CD4-positive, alpha-beta memory T cell (primary cell): ENCODE measurements at regions of chr19 and their contacts with region 1.

Region 1: GRCh38 chr19:38849860-38850435 is at the start of gene HNRNPL:
- DNase-seq: peak; percentile 99 to 100 (median 100)
- H3K4me3 ChIP-seq: peak within 1 kb of the TSS; percentile 94 to 98
- H3K4me3 Mint-ChIP-seq: peak within 1 kb of the TSS; percentile 94 to 97 (median 96)
- H3K27ac ChIP-seq: peak within 1 kb of the TSS; percentile 99
- H3K27ac Mint-ChIP-seq: peak within 1 kb of the TSS; percentile 83 to 100 (median 99)
- H3K4me1 ChIP-seq: peaks cover 58% of the 10 kb centered on the region
- H3K4me1 Mint-ChIP-seq: peaks cover 30 to 72% (median 50%) of the 10 kb centered on the region in 4 donors
- H3K27me3 ChIP-seq: no peaks in the 10 kb centered on the region
- H3K27me3 Mint-ChIP-seq: peaks cover 1% of the 10 kb centered on the region in 2 donors
- total RNA-seq, gene HNRNPL: 329 to 351 TPM

Region 2: GRCh38 chr19:38618590-38619360 is 231.2 kb before region 1 on chr19 and contains the start of gene EIF3K:
- CTCF ChIA-PET with region 1: no interaction called
- POLR2A ChIA-PET with region 1: interaction called, 18 read pairs
- intact Hi-C with region 1: no loop called
- DNase-seq: peak; percentile 95 to 97 (median 96)
- H3K4me3 ChIP-seq: peak within 1 kb of the TSS; percentile 97 to 99
- H3K4me3 Mint-ChIP-seq: peak within 1 kb of the TSS; percentile 95 to 100 (median 100)
- H3K27ac ChIP-seq: peak within 1 kb of the TSS; percentile 90
- H3K27ac Mint-ChIP-seq: peak within 1 kb of the TSS; percentile 93 to 100 (median 99)
- H3K4me1 ChIP-seq: peaks cover 57% of the 10 kb centered on the region
- H3K4me1 Mint-ChIP-seq: peaks cover 28 to 60% (median 45%) of the 10 kb centered on the region in 4 donors
- H3K27me3 ChIP-seq: no peaks in the 10 kb centered on the region
- H3K27me3 Mint-ChIP-seq: no peaks in the 10 kb centered on the region
- total RNA-seq, gene EIF3K: 320 to 340 TPM

Region 3: GRCh38 chr19:38759590-38760003 is 90.4 kb before region 1 on chr19:
- CTCF ChIA-PET with region 1: no interaction called
- POLR2A ChIA-PET with region 1: no interaction called
- intact Hi-C with region 1: no loop called
- DNase-seq: no peak
- H3K4me3 ChIP-seq: no peak overlapping the region
- H3K4me3 Mint-ChIP-seq: no peak overlapping the region
- H3K27ac ChIP-seq: no peak overlapping the region
- H3K27ac Mint-ChIP-seq: no peak overlapping the region
- H3K4me1 ChIP-seq: no peaks in the 10 kb centered on the region
- H3K4me1 Mint-ChIP-seq: peaks cover 0 to 5% (median 0%) of the 10 kb centered on the region in 4 donors
- H3K27me3 ChIP-seq: no peaks in the 10 kb centered on the region
- H3K27me3 Mint-ChIP-seq: peaks cover 0 to 2% of the 10 kb centered on the region in 2 donors

Region 4: GRCh38 chr19:38769635-38770211 is 80.2 kb before region 1 on chr19:
- CTCF ChIA-PET with region 1: no interaction called
- POLR2A ChIA-PET with region 1: interaction called, 25 read pairs
- intact Hi-C with region 1: no loop called
- DNase-seq: peak; percentile 87 to 94 (median 90)
- H3K4me3 ChIP-seq: peak overlapping the region in 1 of 2 donors; percentile 47
- H3K4me3 Mint-ChIP-seq: peak overlapping the region; percentile 37 to 71 (median 64)
- H3K27ac ChIP-seq: peak overlapping the region; percentile 48
- H3K27ac Mint-ChIP-seq: peak overlapping the region; percentile 78 to 95 (median 91)
- H3K4me1 ChIP-seq: peaks cover 6% of the 10 kb centered on the region
- H3K4me1 Mint-ChIP-seq: peaks cover 6 to 8% (median 7%) of the 10 kb centered on the region in 4 donors
- H3K27me3 ChIP-seq: no peaks in the 10 kb centered on the region
- H3K27me3 Mint-ChIP-seq: no peaks in the 10 kb centered on the region

Region 5: GRCh38 chr19:38862321-38863059 is 12.5 kb after region 1 on chr19:
- CTCF ChIA-PET with region 1: interaction called, 45 read pairs
- POLR2A ChIA-PET with region 1: interaction called, 297 read pairs
- intact Hi-C with region 1: no loop called
- DNase-seq: no peak
- H3K4me3 ChIP-seq: no peak overlapping the region
- H3K4me3 Mint-ChIP-seq: no peak overlapping the region
- H3K27ac ChIP-seq: no peak overlapping the region
- H3K27ac Mint-ChIP-seq: peak overlapping the region in 1 of 7 donors; percentile 4
- H3K4me1 ChIP-seq: peaks cover 33% of the 10 kb centered on the region
- H3K4me1 Mint-ChIP-seq: peaks cover 27 to 45% (median 35%) of the 10 kb centered on the region in 4 donors
- H3K27me3 ChIP-seq: no peaks in the 10 kb centered on the region
- H3K27me3 Mint-ChIP-seq: no peaks in the 10 kb centered on the region

Region 6: GRCh38 chr19:38891771-38892170 is 41.8 kb after region 1 on chr19:
- CTCF ChIA-PET with region 1: interaction called, 12 read pairs
- POLR2A ChIA-PET with region 1: interaction called, 14 read pairs
- intact Hi-C with region 1: no loop called
- DNase-seq: no peak
- H3K4me3 ChIP-seq: no peak overlapping the region
- H3K4me3 Mint-ChIP-seq: no peak overlapping the region
- H3K27ac ChIP-seq: no peak overlapping the region
- H3K27ac Mint-ChIP-seq: peak overlapping the region in 1 of 7 donors; percentile 13
- H3K4me1 ChIP-seq: peaks cover 4% of the 10 kb centered on the region
- H3K4me1 Mint-ChIP-seq: peaks cover 2 to 13% (median 5%) of the 10 kb centered on the region in 4 donors
- H3K27me3 ChIP-seq: no peaks in the 10 kb centered on the region
- H3K27me3 Mint-ChIP-seq: no peaks in the 10 kb centered on the region

Region 7: DNA sequence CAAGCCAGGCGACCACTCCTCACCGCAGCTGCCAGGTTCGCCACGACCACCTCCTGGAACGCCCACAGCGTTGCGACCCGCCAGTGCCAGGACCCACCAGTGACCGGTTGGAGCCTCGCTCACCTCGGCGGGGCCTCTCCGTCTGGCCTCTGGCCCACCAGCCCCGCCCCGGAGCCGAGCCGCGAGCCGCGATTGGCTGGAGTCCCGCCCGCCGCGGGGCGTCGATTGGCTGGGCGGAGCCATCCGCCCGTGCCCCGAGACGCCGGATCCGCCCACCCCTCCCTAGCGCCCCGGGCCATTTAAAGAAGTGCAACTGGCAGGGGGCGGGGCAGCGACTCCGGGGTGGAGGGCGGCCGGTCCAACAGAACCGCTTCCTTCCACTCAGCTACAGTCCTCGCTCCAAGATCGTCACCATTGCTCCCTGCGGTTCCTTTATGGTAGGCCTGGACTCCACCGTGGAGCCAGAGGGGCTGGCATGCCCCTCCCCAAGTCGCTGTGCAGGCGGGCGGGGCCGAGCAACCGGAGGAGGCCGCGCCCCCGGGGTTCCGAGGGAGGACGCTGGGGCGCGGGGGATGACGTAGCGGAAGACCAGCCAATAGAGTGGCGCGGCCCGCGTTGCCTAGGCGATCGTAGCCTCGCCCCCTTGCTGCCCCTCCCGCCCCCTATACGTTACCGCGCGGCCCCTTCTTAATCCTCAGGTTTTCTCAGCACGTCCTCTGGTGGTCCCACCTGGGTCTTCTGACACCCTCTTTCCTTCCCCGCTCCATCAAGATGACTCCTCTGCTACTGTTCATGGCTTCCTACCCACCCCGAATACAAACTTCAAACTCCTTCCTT is 1594.5 kb after region 1 on chr19 and contains the start of gene SERTAD3:
- CTCF ChIA-PET with region 1: no interaction called
- POLR2A ChIA-PET with region 1: no interaction called
- intact Hi-C with region 1: loop called (anchors 5 kb)
- DNase-seq: peak; percentile 96 to 99 (median 97)
- H3K4me3 ChIP-seq: peak within 1 kb of the TSS; percentile 96 to 100
- H3K4me3 Mint-ChIP-seq: peak within 1 kb of the TSS; percentile 96 to 100 (median 100)
- H3K27ac ChIP-seq: peak within 1 kb of the TSS; percentile 75
- H3K27ac Mint-ChIP-seq: peak within 1 kb of the TSS; percentile 85 to 100 (median 99)
- H3K4me1 ChIP-seq: peaks cover 11% of the 10 kb centered on the region
- H3K4me1 Mint-ChIP-seq: peaks cover 11 to 22% (median 18%) of the 10 kb centered on the region in 4 donors
- H3K27me3 ChIP-seq: no peaks in the 10 kb centered on the region
- H3K27me3 Mint-ChIP-seq: no peaks in the 10 kb centered on the region
- total RNA-seq, gene SERTAD3: 17.8 to 19.4 TPM